T-cell (primary cell): ENCODE measurements at regions of chr1 and their contacts with region 1.

Region 1: GRCh38 chr1:44819608-44820327 is 11.4 kb downstream of the BTBD19 start:
- DNase-seq: peak; percentile 55 to 90 (median 75)
- ATAC-seq: peak; percentile 79 to 87 (median 82)
- H3K4me3 ChIP-seq: peak overlapping the region; percentile 77 to 91
- H3K4me3 Mint-ChIP-seq: peak overlapping the region; percentile 84 to 96 (median 95)
- H3K27ac ChIP-seq: peak overlapping the region; percentile 100
- H3K27ac Mint-ChIP-seq: peak overlapping the region; percentile 100
- H3K4me1 ChIP-seq: peaks cover 10 to 30% of the 10 kb centered on the region in 2 experiments
- H3K4me1 Mint-ChIP-seq: peaks cover 39 to 47% (median 41%) of the 10 kb centered on the region in 3 donors
- H3K27me3 ChIP-seq: no peaks in the 10 kb centered on the region
- H3K27me3 Mint-ChIP-seq: no peaks in the 10 kb centered on the region

Region 2: DNA sequence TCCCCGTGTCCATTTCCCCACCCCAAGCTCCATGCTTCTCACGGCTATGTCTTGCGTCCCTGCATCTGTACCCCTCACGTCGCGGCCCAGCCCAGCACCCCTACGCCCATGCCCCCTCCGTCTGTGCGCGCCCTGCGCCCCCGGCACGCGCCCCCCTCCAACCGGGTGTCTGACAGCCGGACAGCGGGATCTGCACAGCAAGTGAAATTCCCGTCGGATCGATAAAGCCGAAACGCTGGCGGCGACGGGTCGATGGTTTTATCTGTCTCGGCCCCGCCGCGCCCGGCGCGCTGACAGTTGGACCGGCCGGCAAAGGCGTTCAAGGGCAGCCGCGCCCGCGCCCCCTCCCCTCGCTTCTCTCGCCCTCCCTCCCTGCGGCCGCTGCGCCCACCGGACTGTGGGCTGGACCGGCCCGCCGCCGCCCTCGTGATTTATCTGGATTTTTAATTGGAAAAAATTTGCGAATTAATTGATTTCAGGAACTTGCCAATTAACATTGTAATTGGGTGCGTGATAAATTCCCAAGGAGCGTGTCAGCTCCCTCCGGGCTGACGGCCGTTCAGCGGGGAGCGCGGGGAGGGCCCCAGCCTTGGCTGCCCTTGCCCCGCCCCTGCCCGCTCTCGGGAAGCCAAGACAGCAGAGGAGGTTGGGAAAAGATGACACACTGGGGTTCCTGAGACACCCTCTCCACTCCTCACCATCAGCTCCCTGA is 202.6 kb before region 1 on chr1:
- CTCF ChIA-PET with region 1: interaction called in 1 of 2 experiments, 10 read pairs
- POLR2A ChIA-PET with region 1: no interaction called
- DNase-seq: no peak
- ATAC-seq: no peak
- H3K4me3 ChIP-seq: no peak overlapping the region
- H3K4me3 Mint-ChIP-seq: no peak overlapping the region
- H3K27ac ChIP-seq: no peak overlapping the region
- H3K27ac Mint-ChIP-seq: no peak overlapping the region
- H3K4me1 ChIP-seq: no peaks in the 10 kb centered on the region
- H3K4me1 Mint-ChIP-seq: no peaks in the 10 kb centered on the region
- H3K27me3 ChIP-seq: no peaks in the 10 kb centered on the region
- H3K27me3 Mint-ChIP-seq: no peaks in the 10 kb centered on the region

Region 3: GRCh38 chr1:44807262-44808062 is 12.3 kb before region 1 on chr1 and contains the start of gene DYNLT4:
- CTCF ChIA-PET with region 1: interaction called, 3 to 22 read pairs
- POLR2A ChIA-PET with region 1: interaction called, 35 to 51 read pairs
- DNase-seq: peak; percentile 81 to 97 (median 91)
- ATAC-seq: peak; percentile 61 to 74 (median 70)
- H3K4me3 ChIP-seq: peak within 1 kb of the TSS; percentile 16 to 35
- H3K4me3 Mint-ChIP-seq: peak within 1 kb of the TSS; percentile 61 to 85 (median 68)
- H3K27ac ChIP-seq: peak within 1 kb of the TSS; percentile 98
- H3K27ac Mint-ChIP-seq: peak within 1 kb of the TSS; percentile 99
- H3K4me1 ChIP-seq: peaks cover 60 to 92% of the 10 kb centered on the region in 2 experiments
- H3K4me1 Mint-ChIP-seq: peaks cover 86 to 92% (median 87%) of the 10 kb centered on the region in 3 donors
- H3K27me3 ChIP-seq: no peaks in the 10 kb centered on the region
- H3K27me3 Mint-ChIP-seq: no peaks in the 10 kb centered on the region
- total RNA-seq, gene DYNLT4: 0.36 to 4.3 (median 2.3) TPM in 4 of 5 donors, not detected in the other

Region 4: GRCh38 chr1:44842862-44843655 is 23.3 kb after region 1 on chr1 and contains the start of gene PTCH2:
- CTCF ChIA-PET with region 1: no interaction called
- POLR2A ChIA-PET with region 1: no interaction called
- DNase-seq: peak in 8 of 35 experiments; percentile 11 to 44 (median 20)
- ATAC-seq: peak; percentile 64 to 82 (median 76)
- H3K4me3 ChIP-seq: peak within 1 kb of the TSS; percentile 25 to 54
- H3K4me3 Mint-ChIP-seq: peak within 1 kb of the TSS; percentile 43 to 67 (median 53)
- H3K27ac ChIP-seq: no peak within 1 kb of the TSS
- H3K27ac Mint-ChIP-seq: no peak within 1 kb of the TSS
- H3K4me1 ChIP-seq: peaks cover 0 to 12% of the 10 kb centered on the region in 2 experiments
- H3K4me1 Mint-ChIP-seq: peaks cover 4 to 13% (median 8%) of the 10 kb centered on the region in 3 donors
- H3K27me3 ChIP-seq: peaks cover 0 to 43% of the 10 kb centered on the region in 2 experiments
- H3K27me3 Mint-ChIP-seq: peaks cover 13 to 25% of the 10 kb centered on the region in 2 donors
- total RNA-seq, gene PTCH2: 0.89 to 2.3 (median 1.3) TPM